ENCODE measurements at regions of chr17 and their contacts with region 1.

Region 1: DNA sequence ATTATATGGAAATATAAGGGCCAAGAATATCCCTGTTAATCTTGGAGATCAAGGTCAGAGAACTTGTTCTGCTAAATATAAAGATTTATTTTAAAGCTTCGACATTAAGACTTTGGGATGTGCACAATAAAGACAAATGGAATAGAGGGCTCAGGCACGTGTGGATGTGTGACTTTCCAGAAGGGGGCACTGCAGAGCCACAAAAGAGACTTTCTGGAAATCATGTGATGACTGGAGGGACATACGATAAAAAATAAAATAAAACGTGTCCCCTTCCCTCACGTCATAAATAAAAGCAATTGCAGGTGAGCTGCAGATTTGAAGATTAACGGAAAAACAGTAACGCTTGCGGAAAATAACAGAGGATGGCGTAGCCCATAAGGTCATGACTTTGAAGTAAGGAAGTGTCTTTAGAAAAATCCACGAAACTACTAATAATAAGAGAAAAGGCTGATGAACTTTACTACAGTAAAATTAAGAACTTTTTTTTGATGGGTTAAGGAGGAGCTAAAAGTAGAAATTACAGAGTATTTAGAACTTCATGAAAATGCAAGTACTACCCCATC is 9.4 kb upstream of the ENGASE start:
- DNase-seq: peak; percentile 28 to 67 (median 43)
- H3K4me3 ChIP-seq: no peak overlapping the region
- H3K4me3 Mint-ChIP-seq: peak overlapping the region in 1 of 7 donors; percentile 68
- H3K27ac ChIP-seq: no peak overlapping the region
- H3K27ac Mint-ChIP-seq: no peak overlapping the region
- H3K4me1 ChIP-seq: peaks cover 3% of the 10 kb centered on the region
- H3K4me1 Mint-ChIP-seq: peaks cover 0 to 3% (median 2%) of the 10 kb centered on the region in 3 donors
- H3K27me3 ChIP-seq: no peaks in the 10 kb centered on the region
- H3K27me3 Mint-ChIP-seq: peaks cover 4 to 8% of the 10 kb centered on the region in 2 donors

Region 2: GRCh38 chr17:79393358-79394202 is 328.4 kb after region 1 on chr17:
- CTCF ChIA-PET with region 1: interaction called, 12 read pairs
- POLR2A ChIA-PET with region 1: no interaction called
- DNase-seq: peak; percentile 27 to 63 (median 51)
- H3K4me3 ChIP-seq: no peak overlapping the region
- H3K4me3 Mint-ChIP-seq: no peak overlapping the region
- H3K27ac ChIP-seq: no peak overlapping the region
- H3K27ac Mint-ChIP-seq: no peak overlapping the region
- H3K4me1 ChIP-seq: peaks cover 4% of the 10 kb centered on the region
- H3K4me1 Mint-ChIP-seq: peaks cover 2 to 8% (median 8%) of the 10 kb centered on the region in 3 donors
- H3K27me3 ChIP-seq: peaks cover 33% of the 10 kb centered on the region
- H3K27me3 Mint-ChIP-seq: peaks cover 30 to 64% of the 10 kb centered on the region in 2 donors